Tibial artery (tissue), 4 donors: ENCODE measurements at regions of chr2 and their contacts with region 1.

Region 1: DNA sequence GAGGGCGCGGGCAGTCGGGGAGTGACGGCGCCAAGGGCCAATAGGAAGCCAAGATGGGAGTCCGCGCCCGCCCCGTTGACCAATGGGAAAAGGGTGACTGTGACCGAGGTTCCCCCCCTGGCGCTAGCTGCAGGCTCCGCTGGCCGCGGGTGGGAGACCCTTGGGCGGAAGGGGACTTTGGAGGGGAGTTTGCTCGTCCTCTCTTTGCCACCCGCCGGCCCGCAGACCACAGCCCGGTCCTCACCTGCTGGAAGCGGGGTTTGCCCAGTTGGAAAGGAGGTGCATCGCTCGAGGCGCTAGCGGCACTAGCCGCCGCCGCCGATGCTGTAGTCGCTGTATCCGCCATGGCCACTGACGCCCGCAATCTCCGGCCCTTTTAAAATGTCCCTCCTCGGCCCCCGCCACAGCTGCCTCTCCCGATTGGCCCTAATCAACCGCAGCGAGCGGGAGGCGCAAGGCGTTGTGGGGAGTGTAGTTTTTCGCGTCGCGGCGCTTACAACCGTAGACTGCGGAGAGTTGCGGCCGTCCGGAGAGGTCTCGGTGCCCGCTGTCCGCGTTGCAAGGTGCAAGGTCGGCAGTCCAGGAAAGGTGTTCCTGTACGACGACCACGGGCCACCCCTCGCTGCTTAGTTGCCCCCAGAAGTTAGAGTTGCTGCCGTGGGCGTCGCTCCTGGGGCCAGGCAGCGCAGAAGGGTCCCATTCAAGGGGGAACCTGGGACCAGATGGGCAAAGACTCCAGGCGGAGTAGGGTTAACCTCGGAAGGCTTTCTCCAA is at the start of gene SFXN5:
- DNase-seq: peak; percentile 98 to 99
- H3K4me3 ChIP-seq: peak within 1 kb of the TSS; percentile 89 to 94
- H3K27ac ChIP-seq: peak within 1 kb of the TSS; percentile 79 to 88
- H3K4me1 ChIP-seq: peaks cover 0 to 28% (median 27%) of the 10 kb centered on the region in 4 donors
- H3K27me3 ChIP-seq: no peaks in the 10 kb centered on the region
- CTCF ChIP-seq: peak; percentile 16 to 36

Region 2: GRCh38 chr2:73112913-73113633 is 41.5 kb after region 1 on chr2 and contains the start of gene RAB11FIP5:
- intact Hi-C with region 1: loop called (anchors 2 kb)
- DNase-seq: peak; percentile 71 to 86
- H3K4me3 ChIP-seq: peak within 1 kb of the TSS; percentile 83 to 90
- H3K27ac ChIP-seq: peak within 1 kb of the TSS; percentile 82 to 89
- H3K4me1 ChIP-seq: peaks cover 0 to 32% (median 24%) of the 10 kb centered on the region in 4 donors
- H3K27me3 ChIP-seq: no peaks in the 10 kb centered on the region
- CTCF ChIP-seq: peak; percentile 4 to 7